ENCODE measurements at regions of chr3 and their contacts with region 1.

Region 1: DNA sequence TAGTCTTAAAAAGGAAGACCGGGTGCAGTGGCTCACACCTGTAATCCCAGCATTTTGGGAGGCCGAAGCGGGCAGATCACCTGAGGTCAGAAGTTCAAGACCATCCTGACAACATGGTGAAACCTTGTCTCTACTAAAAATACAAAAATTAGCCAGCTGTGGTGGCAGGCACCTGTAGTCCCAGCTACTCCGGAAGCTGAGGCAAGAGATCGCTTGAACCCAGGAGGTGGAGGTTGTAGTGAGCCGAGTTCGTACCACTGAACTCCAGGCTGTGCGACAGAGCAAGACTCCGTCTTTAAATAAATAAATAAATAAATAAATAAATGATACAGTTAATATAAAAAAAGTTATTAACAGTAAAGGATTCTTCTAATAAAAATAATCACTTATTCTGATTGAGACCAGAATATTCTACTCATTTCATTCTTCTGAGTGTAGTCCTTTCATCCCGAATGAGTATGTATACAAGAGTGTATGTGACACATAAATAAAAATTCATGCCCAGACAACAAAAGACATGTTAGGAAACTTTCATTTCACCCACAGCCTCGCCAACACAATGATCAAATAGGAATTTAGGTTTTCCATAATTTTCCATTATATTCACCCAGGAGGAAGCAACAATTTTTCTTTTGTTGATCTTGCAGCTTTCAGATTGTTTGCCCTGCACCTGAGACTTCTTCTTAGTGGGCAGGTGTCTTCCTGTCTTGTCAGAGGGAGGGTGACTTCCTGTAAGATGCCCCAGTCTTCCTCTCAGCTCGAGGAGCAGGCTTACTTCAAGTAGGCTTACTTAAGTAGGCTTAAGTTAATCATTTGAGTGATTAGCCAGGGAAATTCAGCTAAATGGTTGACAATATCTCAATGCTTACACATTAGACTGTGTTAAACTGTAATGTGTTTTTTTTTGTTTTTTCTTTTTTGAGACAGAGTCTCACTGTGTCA is 7.8 kb upstream of the NUP210 start:
- DNase-seq: no peak
- ATAC-seq: peak; percentile 61
- H3K4me3 ChIP-seq: no peak overlapping the region
- H3K27ac ChIP-seq: no peak overlapping the region
- H3K4me1 ChIP-seq: no peaks in the 10 kb centered on the region
- H3K27me3 ChIP-seq: no peaks in the 10 kb centered on the region
- CTCF ChIP-seq: no peak
- EP300 ChIP-seq: no peak
- POLR2A ChIP-seq: no peak
- RAD21 ChIP-seq: no peak

Region 2: DNA sequence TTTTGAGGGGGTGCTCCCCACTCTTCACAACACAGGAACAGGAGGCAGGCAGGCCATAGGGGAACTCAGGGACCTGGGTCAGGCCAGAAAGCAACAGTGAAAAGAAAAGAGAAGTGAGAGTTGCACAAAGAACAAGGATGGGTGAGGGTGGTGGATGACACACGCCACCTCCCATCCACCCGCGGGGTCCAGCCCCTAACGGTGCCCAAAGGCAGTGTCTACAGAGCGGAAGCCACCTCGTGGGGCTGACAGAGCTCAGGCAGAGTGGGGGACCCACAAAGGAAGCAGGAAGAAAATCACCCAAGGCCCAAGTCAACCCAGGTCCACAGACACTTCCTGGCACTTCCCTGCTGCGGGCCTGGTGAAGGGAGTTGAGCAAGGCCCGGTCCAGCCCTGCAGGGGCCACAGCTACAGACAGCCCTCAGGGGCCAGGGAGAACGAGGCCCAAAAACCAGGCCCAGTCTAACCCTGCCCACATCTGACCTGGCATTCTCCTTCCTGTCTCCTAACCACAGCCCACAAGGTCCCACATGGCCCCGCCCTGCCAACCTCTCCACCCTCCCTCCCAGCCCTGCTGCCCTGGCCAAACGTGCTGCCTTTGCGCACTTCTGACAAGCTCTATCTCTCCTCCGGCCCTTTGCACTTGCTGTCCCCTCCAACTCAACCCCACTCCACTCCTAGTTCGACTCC is 13.7 kb before region 1 on chr3:
- CTCF ChIA-PET with region 1: interaction called, 11 read pairs
- POLR2A ChIA-PET with region 1: interaction called, 7 read pairs
- RAD21 ChIA-PET with region 1: interaction called, 3 read pairs
- SMC1A ChIA-PET with region 1: interaction called, 12 read pairs
- in situ Hi-C with region 1: no loop called
- intact Hi-C with region 1: no loop called
- DNase-seq: peak; percentile 89
- ATAC-seq: peak; percentile 89
- H3K4me3 ChIP-seq: peak overlapping the region; percentile 80
- H3K27ac ChIP-seq: peak overlapping the region; percentile 98
- H3K4me1 ChIP-seq: peaks cover 46% of the 10 kb centered on the region
- H3K27me3 ChIP-seq: no peaks in the 10 kb centered on the region
- CTCF ChIP-seq: no peak
- EP300 ChIP-seq: peak; percentile 68 to 89; a peak in 3 of 4 replicates
- POLR2A ChIP-seq: peak; percentile 56
- RAD21 ChIP-seq: no peak

Measured in GM12878 (cell line).